ENCODE measurements at regions of chr15 and their contacts with region 1.

Region 1: GRCh38 chr15:66940368-66940767 is 125.0 kb upstream of the SMAD3 start:
- DNase-seq: peak; percentile 73
- H3K4me3 ChIP-seq: no peak overlapping the region
- H3K27ac ChIP-seq: no peak overlapping the region
- H3K4me1 ChIP-seq: peaks cover 3% of the 10 kb centered on the region
- H3K27me3 ChIP-seq: no peaks in the 10 kb centered on the region
- CTCF ChIP-seq: no peak

Region 2: GRCh38 chr15:67274236-67274635 is 333.9 kb after region 1 on chr15:
- CTCF ChIA-PET with region 1: no interaction called
- dilution Hi-C with region 1: loop called (anchors 5 kb)
- in situ Hi-C with region 1: no loop called
- intact Hi-C with region 1: no loop called
- DNase-seq: no peak
- H3K4me3 ChIP-seq: no peak overlapping the region
- H3K27ac ChIP-seq: no peak overlapping the region
- H3K4me1 ChIP-seq: no peaks in the 10 kb centered on the region
- H3K27me3 ChIP-seq: no peaks in the 10 kb centered on the region
- CTCF ChIP-seq: no peak

Measured in mammary epithelial cell (primary cell).